ENCODE measurements at regions of chr17 and their contacts with region 1.

Region 1: DNA sequence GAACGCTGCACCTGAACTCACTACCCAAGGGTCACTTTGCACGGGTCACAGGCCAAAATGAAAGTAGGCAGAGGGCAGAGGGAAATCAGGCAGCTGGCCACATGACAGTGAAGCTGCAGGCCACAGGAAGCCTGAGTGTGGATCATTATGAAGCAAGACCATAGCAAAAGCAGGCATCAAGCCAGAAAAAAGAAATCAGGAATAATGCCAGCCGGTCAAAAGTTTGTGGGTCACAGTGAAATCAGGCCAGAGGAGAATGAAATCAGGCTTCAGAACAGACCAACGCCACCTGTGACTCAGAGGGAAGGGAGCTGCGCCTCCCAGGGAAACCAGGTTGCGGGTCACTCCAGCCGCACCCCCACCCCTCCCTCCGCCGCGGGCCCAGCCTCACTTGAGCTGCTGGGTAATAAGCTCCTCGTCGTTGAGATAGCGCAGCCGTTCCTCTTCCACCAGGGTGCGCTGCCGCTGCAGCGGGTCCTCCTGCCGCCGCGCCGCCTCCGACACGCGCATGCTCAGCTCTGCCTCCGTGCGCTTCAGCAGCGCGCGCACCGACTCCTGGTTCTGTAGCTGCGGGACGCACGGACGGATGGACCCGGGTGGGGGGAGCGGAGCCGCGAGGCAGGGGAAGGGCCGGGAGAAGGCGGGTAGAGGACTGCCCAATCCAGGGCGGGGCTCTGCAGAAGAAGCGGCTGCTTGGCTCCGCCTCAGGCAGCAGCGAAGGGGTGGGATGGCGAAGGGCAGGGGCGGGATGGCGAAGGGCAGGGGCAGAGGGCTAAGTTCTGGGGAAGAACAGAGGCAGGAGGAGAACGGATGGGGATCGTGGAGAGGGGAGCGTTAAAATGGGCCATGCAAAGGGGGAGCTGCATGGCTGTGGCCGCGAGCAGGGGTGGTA is 47.7 kb downstream of the SRCIN1 start:
- DNase-seq: peak; percentile 96
- ATAC-seq: peak; percentile 72
- H3K4me3 Mint-ChIP-seq: peak overlapping the region; percentile 90
- H3K27ac Mint-ChIP-seq: no peak overlapping the region; the same call in 1 of the 2 replicates
- H3K4me1 Mint-ChIP-seq: peaks cover 37% of the 10 kb centered on the region
- H3K27me3 Mint-ChIP-seq: peaks cover 58% of the 10 kb centered on the region
- CTCF ChIP-seq: peak; percentile 57; the same call in 1 of the 2 replicates

Region 2: GRCh38 chr17:38444151-38444550 is 113.9 kb before region 1 on chr17:
- CTCF ChIA-PET with region 1: interaction called, 10 read pairs
- POLR2A ChIA-PET with region 1: no interaction called
- DNase-seq: peak; percentile 76
- ATAC-seq: peak; percentile 70
- H3K4me3 Mint-ChIP-seq: no peak overlapping the region
- H3K27ac Mint-ChIP-seq: no peak overlapping the region
- H3K4me1 Mint-ChIP-seq: peaks cover 57% of the 10 kb centered on the region
- H3K27me3 Mint-ChIP-seq: no peaks in the 10 kb centered on the region
- CTCF ChIP-seq: peak; percentile 78

Region 3: DNA sequence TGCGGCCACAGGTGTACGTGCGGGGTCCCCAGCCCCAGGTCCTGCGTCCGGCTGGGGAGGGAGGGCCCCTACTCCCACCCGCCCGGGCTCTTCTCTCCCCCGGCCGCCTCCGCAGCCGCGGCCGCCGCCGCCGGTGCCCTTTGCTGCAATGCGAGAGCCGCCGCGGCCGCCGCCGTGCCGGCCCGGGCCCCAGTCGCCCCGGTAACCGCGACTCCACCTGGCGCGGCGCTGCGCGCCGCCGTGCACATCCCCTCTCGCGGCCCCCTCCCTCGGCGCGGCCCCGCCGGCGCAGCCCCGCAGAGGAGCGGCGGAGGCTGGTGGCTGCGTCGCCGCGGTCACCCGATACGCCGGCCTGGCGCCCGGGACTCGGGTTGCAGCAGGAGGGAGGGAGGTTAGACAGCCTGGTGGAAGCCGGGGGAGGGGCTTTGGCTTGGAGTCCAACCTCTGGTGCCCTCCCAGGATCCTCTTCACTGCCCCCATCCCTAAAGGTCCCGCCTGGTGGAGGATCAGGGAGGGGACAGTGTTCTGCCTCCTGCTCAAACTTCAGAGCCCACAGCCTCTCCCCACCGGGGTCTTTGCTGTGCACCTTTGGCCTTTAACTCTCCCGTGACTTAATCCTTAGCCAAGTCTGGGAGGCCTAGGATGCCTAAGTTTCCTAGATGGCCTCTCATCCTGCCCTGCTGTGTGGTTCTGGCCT is 14.7 kb after region 1 on chr17:
- CTCF ChIA-PET with region 1: interaction called, 57 read pairs
- POLR2A ChIA-PET with region 1: interaction called, 3 read pairs
- DNase-seq: peak; percentile 72
- ATAC-seq: peak; percentile 68
- H3K4me3 Mint-ChIP-seq: peak overlapping the region; percentile 59
- H3K27ac Mint-ChIP-seq: no peak overlapping the region
- H3K4me1 Mint-ChIP-seq: peaks cover 46% of the 10 kb centered on the region
- H3K27me3 Mint-ChIP-seq: peaks cover 93% of the 10 kb centered on the region
- CTCF ChIP-seq: no peak

Region 4: GRCh38 chr17:38605888-38606645 is 48.0 kb after region 1 on chr17 and contains the start of gene SRCIN1:
- CTCF ChIA-PET with region 1: interaction called, 354 read pairs
- POLR2A ChIA-PET with region 1: interaction called, 5 read pairs
- DNase-seq: peak; percentile 74
- ATAC-seq: peak; percentile 5
- H3K4me3 Mint-ChIP-seq: peak within 1 kb of the TSS; percentile 71
- H3K27ac Mint-ChIP-seq: no peak within 1 kb of the TSS
- H3K4me1 Mint-ChIP-seq: peaks cover 72% of the 10 kb centered on the region
- H3K27me3 Mint-ChIP-seq: peaks cover 44% of the 10 kb centered on the region
- CTCF ChIP-seq: peak; percentile 99
- total RNA-seq, gene SRCIN1: 10.7 to 17.3 TPM (median 11.1 TPM) in 3 replicates

Region 5: DNA sequence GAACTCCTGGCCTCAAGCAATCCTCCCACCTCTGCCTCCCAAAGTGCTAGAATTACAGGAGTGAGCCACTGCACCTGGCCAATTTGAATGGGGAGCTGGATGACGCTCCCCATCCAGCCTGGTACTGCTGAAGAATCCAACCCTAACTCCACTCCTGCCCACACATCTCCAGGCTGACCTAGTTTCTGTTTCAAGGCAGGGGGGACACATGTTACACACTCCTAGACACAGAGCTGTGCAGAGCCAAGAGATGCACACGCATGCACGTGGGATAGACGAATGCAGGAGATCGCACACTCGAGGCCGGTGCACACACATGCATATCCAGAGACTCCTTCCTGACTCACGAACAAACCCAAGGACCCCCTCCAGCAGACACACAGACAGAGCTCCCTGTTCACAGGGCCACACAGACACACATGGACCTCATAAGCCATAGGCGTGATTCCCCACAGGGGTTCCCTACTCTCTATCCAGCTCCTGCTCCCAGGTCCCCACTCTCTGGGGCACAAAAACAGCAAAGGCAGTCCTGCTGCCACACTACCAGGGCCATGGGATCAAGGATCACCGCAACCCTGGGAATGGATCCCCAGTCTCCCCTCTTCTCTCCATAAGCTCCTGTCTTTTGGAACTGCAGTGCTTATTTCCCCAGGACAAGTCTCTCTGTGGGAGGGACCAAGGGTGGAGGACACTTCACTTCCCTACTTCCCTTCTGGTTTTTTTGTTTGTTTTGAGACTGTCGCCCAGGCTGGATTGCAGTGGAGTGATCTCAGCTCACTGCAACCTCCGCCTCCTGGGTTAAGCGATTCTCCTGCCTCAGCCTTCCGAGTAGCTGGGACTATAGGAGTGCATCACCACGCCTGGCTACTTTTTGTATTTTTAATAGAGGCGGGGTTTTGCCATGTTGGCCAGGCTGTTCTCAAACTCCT is 102.3 kb after region 1 on chr17:
- CTCF ChIA-PET with region 1: interaction called, 501 read pairs
- POLR2A ChIA-PET with region 1: interaction called, 3 read pairs
- DNase-seq: no peak
- ATAC-seq: no peak
- H3K4me3 Mint-ChIP-seq: no peak overlapping the region
- H3K27ac Mint-ChIP-seq: no peak overlapping the region
- H3K4me1 Mint-ChIP-seq: peaks cover 41% of the 10 kb centered on the region
- H3K27me3 Mint-ChIP-seq: peaks cover 28% of the 10 kb centered on the region
- CTCF ChIP-seq: no peak

Region 6: GRCh38 chr17:38704645-38705522 is 146.8 kb after region 1 on chr17 and contains the start of gene MLLT6:
- CTCF ChIA-PET with region 1: interaction called, 13 read pairs
- POLR2A ChIA-PET with region 1: no interaction called
- DNase-seq: peak; percentile 79
- ATAC-seq: peak; percentile 19
- H3K4me3 Mint-ChIP-seq: peak within 1 kb of the TSS; percentile 88
- H3K27ac Mint-ChIP-seq: peak within 1 kb of the TSS; percentile 83
- H3K4me1 Mint-ChIP-seq: peaks cover 53% of the 10 kb centered on the region
- H3K27me3 Mint-ChIP-seq: peaks cover 89% of the 10 kb centered on the region
- CTCF ChIP-seq: no peak
- total RNA-seq, gene MLLT6: 34.4 to 48.0 TPM (median 36.6 TPM) in 3 replicates

Measured in WTC11 (cell line).